HCT116 (cell line): ENCODE measurements at regions of chr12 and their contacts with region 1.

Region 1: GRCh38 chr12:132489602-132490239 is at the start of gene FBRSL1:
- DNase-seq: peak; percentile 49
- ATAC-seq: peak; percentile 82
- H3K4me3 ChIP-seq: peak within 1 kb of the TSS; percentile 82 to 88
- H3K27ac ChIP-seq: peak within 1 kb of the TSS; percentile 71; the same call in 1 of the 2 replicates
- H3K4me1 ChIP-seq: peaks cover 15 to 41% of the 10 kb centered on the region in 2 experiments; a peak in 3 of 4 replicates
- H3K27me3 ChIP-seq: no peaks in the 10 kb centered on the region
- CTCF ChIP-seq: 0 out of 6 replicates have a peak, but pooled peaks of 1 of the 3 experiments have one; percentile 3
- POLR2A ChIP-seq: no peak
- RAD21 ChIP-seq: no peak
- total RNA-seq, gene FBRSL1: 124 TPM

Region 2: GRCh38 chr12:132445884-132446632 is 43.7 kb before region 1 on chr12:
- CTCF ChIA-PET with region 1: no interaction called
- POLR2A ChIA-PET with region 1: no interaction called
- RAD21 ChIA-PET with region 1: no interaction called
- intact Hi-C with region 1: loop called (anchors 1 kb)
- DNase-seq: peak; percentile 93
- ATAC-seq: peak; percentile 88
- H3K4me3 ChIP-seq: peak overlapping the region; percentile 93
- H3K27ac ChIP-seq: peak overlapping the region; percentile 50
- H3K4me1 ChIP-seq: peaks cover 0 to 13% of the 10 kb centered on the region in 2 experiments; a peak in 2 of 4 replicates
- H3K27me3 ChIP-seq: no peaks in the 10 kb centered on the region
- CTCF ChIP-seq: no peak
- POLR2A ChIP-seq: no peak
- RAD21 ChIP-seq: no peak